ENCODE measurements at regions of chr2 and their contacts with region 1.

Region 1: DNA sequence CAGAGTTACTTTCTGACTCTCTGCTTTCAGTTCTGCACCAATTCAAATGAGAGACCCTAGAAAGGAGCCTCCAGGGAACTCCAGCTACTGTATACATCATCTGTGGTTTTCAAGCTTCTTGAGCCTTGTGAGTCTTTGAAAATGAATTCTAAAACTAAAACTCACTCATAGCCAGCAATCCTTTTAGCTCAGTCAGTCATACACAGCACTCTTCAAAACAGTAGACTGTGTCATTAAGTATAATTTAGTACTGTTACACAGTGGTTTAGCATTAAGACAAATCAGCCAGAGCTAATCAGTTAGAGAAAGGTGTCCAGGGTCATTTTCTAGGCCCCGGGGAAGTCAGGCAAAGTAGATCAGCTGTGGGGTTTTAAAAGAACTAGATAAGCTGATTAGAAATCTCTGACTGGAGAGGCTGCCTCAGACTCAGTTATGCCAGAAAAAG is 322.1 kb upstream of the THUMPD2 start:
- DNase-seq: no peak
- H3K4me3 Mint-ChIP-seq: no peak overlapping the region
- H3K27ac Mint-ChIP-seq: no peak overlapping the region
- H3K4me1 Mint-ChIP-seq: no peaks in the 10 kb centered on the region
- H3K27me3 Mint-ChIP-seq: no peaks in the 10 kb centered on the region

Region 2: GRCh38 chr2:39913648-39914461 is 187.3 kb before region 1 on chr2:
- intact Hi-C with region 1: no loop called
- DNase-seq: no peak
- H3K4me3 Mint-ChIP-seq: no peak overlapping the region
- H3K27ac Mint-ChIP-seq: peak overlapping the region; percentile 53
- H3K4me1 Mint-ChIP-seq: peaks cover 17% of the 10 kb centered on the region
- H3K27me3 Mint-ChIP-seq: peaks cover 17% of the 10 kb centered on the region

Region 3: GRCh38 chr2:39938035-39938835 is 162.9 kb before region 1 on chr2:
- intact Hi-C with region 1: loop called (anchors 10 kb)
- DNase-seq: no peak
- H3K4me3 Mint-ChIP-seq: peak overlapping the region; percentile 34
- H3K27ac Mint-ChIP-seq: peak overlapping the region; percentile 95
- H3K4me1 Mint-ChIP-seq: peaks cover 34% of the 10 kb centered on the region
- H3K27me3 Mint-ChIP-seq: no peaks in the 10 kb centered on the region

Measured in activated T-helper 1 cell treated with anti-CD3 and anti-CD28 coated beads, Interleukin-12 subunit alpha, Interleukin-12 subunit beta, Interleukin-2, Interleukin-4 antibody, amounts not matched to agents 30 ng/mL and 10 ng/mL and 1 ng/mL, durations not matched to agents 14 hours and 24 hours and 36 hours (primary cell).